ENCODE measurements at regions of chr2 and their contacts with region 1.

Region 1: DNA sequence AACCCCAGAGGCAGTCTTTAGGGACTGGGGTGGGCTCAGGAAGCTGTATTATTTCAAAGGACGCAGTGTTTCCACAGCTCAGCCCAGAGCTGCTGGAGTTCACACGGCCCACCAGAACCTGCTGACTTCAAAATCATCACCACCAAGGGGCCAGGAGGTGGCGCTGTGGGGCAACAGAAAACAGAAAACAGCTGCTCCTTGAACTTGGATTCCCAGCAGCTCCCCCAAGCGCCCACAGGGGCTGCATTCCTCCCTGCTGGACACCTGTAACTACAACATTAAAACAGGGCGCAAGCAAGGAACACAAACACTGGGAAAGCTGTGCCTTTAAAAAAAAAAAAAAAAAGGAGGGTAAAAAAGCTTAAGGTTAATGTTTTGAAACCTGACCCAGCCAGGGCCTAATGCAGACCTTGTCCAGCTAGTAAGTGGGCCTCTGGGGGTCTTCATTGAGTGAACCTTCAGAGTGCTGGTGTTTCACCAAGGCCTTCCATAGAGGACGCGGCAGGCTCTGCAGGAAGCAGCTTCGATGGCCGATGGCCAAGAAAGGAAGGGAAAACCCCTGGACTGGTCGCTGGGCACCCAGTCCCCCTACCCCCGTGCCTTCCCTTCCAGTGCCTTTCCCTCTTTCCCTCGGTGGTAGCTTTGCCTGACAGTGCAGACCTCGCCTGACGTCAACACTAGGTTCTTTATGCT is 25.9 kb downstream of the MLPH start:
- DNase-seq: peak; percentile 90
- H3K4me3 ChIP-seq: no peak overlapping the region
- H3K27ac ChIP-seq: no peak overlapping the region
- H3K4me1 ChIP-seq: no peaks in the 10 kb centered on the region
- H3K27me3 ChIP-seq: peaks cover 7% of the 10 kb centered on the region
- CTCF ChIP-seq: peak; percentile 97

Region 2: GRCh38 chr2:237572021-237572741 is 59.3 kb after region 1 on chr2:
- CTCF ChIA-PET with region 1: interaction called, 62 read pairs
- POLR2A ChIA-PET with region 1: interaction called, 6 read pairs
- intact Hi-C with region 1: loop called (anchors 1 kb)
- DNase-seq: peak; percentile 92
- H3K4me3 ChIP-seq: no peak overlapping the region
- H3K27ac ChIP-seq: no peak overlapping the region
- H3K4me1 ChIP-seq: no peaks in the 10 kb centered on the region
- H3K27me3 ChIP-seq: no peaks in the 10 kb centered on the region
- CTCF ChIP-seq: peak; percentile 99

Region 3: DNA sequence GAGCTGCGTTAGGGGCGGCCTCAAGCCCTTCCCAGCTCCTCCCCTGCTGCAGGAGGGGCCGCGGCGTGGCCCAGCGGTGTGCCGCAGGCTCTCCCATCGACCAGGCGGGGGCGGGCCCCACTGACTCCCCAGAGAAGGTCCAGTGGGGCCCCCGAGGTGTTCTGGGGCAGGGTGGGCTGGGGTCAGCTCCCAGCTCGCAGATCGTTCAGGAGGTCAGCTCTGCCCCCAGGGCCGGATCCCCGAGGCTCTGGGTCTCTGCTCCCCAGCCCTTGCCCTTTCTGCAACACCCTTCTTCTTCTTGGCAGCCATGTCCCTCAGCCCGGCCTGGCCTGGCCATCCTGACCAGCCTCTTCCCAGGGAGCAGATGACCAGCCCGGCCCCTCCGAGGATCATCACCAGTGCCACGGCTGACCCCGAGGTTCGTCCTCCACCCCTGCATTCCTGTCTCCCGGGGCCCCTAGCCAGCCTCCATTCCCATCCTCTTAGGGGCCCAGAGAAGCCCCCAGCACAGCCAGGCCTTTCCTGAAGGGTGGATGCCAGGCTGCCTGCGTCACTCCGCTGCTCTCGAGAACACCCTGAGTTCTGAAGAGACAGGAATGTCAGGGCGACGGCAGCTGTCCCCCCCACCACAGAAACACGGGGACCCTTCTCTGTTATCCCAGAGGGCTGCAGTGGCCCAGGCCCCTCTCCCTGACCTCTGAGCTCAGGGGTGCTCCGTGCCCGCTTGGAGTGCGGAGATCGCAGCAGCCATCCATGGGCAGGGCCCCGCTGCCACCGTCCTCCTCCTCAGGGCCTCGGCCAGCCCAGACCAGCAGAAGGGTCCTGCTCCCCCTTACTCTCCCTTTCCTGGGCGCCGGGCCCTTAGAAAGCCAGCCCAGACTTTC is 614.6 kb after region 1 on chr2:
- CTCF ChIA-PET with region 1: no interaction called
- POLR2A ChIA-PET with region 1: no interaction called
- intact Hi-C with region 1: no loop called
- DNase-seq: peak; percentile 58
- H3K4me3 ChIP-seq: peak overlapping the region; percentile 21
- H3K27ac ChIP-seq: no peak overlapping the region
- H3K4me1 ChIP-seq: no peaks in the 10 kb centered on the region
- H3K27me3 ChIP-seq: no peaks in the 10 kb centered on the region
- CTCF ChIP-seq: 0 out of 2 replicates have a peak, but pooled peaks have one; percentile 16

Measured in A673 (cell line).